ENCODE measurements at regions of chr4 and their contacts with region 1.

Region 1: DNA sequence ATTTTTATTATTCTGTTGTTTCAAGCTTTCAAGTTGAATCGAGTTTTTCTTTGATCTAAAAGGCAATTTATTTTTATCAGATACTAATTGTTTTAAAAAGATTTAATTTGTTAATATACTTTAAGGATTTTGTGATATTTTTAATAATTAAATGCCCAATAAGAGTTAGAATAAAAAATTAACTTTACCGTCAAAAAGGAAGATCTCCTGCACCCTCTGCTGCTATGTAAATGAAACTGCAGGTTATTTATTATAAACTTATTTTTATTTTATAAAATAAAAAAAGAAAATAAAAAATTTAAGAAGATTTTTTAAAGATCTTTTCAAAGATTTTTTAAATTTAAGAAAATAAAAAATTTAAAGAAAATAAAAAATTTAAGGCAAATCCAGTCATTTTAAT is 166.1 kb downstream of the CCSER1 start:
- DNase-seq: no peak
- ATAC-seq: no peak
- H3K4me3 Mint-ChIP-seq: no peak overlapping the region
- H3K27ac Mint-ChIP-seq: no peak overlapping the region
- H3K4me1 Mint-ChIP-seq: no peaks in the 10 kb centered on the region
- H3K27me3 Mint-ChIP-seq: no peaks in the 10 kb centered on the region
- CTCF ChIP-seq: peak; percentile 32; the same call in 1 of the 2 replicates

Region 2: DNA sequence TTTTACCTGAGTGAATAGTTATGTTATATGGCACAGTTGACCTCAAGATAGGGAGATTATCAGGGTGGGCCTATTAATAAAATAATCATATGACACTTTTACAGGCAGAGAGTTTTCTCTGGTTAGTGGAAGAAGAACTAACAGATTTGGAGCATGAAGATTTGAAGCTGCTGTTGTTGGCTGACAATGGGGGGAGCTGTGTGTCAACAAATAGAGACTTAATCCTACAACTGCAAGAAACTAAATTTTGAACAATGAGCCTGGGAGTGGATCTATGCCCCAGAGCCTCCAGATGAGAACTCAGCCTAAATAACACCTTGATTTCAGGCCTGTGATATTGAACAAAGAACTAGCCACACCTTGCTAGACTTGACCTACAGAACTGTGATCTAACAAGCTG is 173.3 kb before region 1 on chr4:
- CTCF ChIA-PET with region 1: interaction called, 13 read pairs
- POLR2A ChIA-PET with region 1: no interaction called
- DNase-seq: no peak
- ATAC-seq: peak; percentile 78
- H3K4me3 Mint-ChIP-seq: no peak overlapping the region
- H3K27ac Mint-ChIP-seq: no peak overlapping the region
- H3K4me1 Mint-ChIP-seq: peaks cover 20% of the 10 kb centered on the region
- H3K27me3 Mint-ChIP-seq: no peaks in the 10 kb centered on the region; the same call in 1 of the 2 replicates
- CTCF ChIP-seq: no peak

Region 3: DNA sequence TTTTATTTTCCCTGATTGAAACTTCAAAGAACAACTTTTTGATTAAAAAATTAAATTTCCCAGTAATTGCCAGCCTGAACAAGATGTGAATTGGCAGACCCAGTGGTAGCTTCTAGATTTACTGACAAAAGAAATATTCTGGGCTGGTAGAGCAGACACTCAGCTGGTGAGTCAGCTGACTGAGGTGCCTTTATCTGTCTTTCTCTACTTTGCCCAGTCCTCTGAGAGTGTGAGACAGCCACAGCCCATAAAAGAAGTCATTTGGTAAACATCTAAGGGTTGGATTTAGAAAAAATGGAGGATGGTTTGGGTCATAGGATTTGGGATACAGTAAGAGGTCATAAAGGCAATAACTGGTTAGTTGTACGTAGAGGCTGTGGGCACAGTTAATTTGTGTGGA is 111.7 kb before region 1 on chr4:
- CTCF ChIA-PET with region 1: no interaction called
- POLR2A ChIA-PET with region 1: no interaction called
- DNase-seq: no peak
- ATAC-seq: no peak
- H3K4me3 Mint-ChIP-seq: no peak overlapping the region
- H3K27ac Mint-ChIP-seq: no peak overlapping the region
- H3K4me1 Mint-ChIP-seq: peaks cover 13% of the 10 kb centered on the region
- H3K27me3 Mint-ChIP-seq: no peaks in the 10 kb centered on the region
- CTCF ChIP-seq: no peak

Region 4: DNA sequence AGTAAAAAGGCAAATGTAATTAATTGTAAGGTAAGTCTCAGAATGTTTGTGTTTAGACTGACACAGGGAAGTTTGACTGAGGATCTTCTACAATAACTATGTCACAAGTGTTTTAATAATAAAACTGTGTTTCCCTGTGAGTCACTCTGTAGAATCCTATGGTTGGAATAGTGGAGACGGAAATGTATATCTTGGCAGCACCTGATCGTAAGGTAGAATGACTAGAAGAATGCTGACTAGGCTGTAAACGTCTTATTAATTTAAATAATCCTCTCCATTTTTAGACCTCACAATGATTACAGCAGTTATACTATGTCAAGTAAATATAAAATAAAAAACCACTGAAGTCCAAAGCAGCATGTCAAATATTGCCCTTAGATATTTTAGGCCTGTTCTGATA is 99.9 kb after region 1 on chr4:
- CTCF ChIA-PET with region 1: no interaction called
- POLR2A ChIA-PET with region 1: no interaction called
- DNase-seq: no peak
- ATAC-seq: no peak
- H3K4me3 Mint-ChIP-seq: no peak overlapping the region
- H3K27ac Mint-ChIP-seq: no peak overlapping the region
- H3K4me1 Mint-ChIP-seq: no peaks in the 10 kb centered on the region
- H3K27me3 Mint-ChIP-seq: no peaks in the 10 kb centered on the region
- CTCF ChIP-seq: no peak

Measured in WTC11 (cell line).